ENCODE measurements at regions of chr22 and their contacts with region 1.

Region 1: GRCh38 chr22:21641789-21642583 is at the start of gene SDF2L1:
- DNase-seq: peak; percentile 97 to 99 (median 98)
- ATAC-seq: peak; percentile 96
- H3K4me3 ChIP-seq: peak within 1 kb of the TSS; percentile 74 to 88
- H3K4me3 Mint-ChIP-seq: peak within 1 kb of the TSS; percentile 82
- H3K27ac ChIP-seq: peak within 1 kb of the TSS; percentile 79 to 80
- H3K27ac Mint-ChIP-seq: peak within 1 kb of the TSS; percentile 88
- H3K4me1 ChIP-seq: peaks cover 28% of the 10 kb centered on the region
- H3K4me1 Mint-ChIP-seq: peaks cover 32% of the 10 kb centered on the region
- H3K27me3 ChIP-seq: no peaks in the 10 kb centered on the region
- H3K27me3 Mint-ChIP-seq: no peaks in the 10 kb centered on the region
- CTCF ChIP-seq: no peak
- total RNA-seq, gene SDF2L1: 20.8 to 21.5 TPM

Region 2: GRCh38 chr22:20964090-20964798 is 677.7 kb before region 1 on chr22:
- CTCF ChIA-PET with region 1: no interaction called
- POLR2A ChIA-PET with region 1: no interaction called
- intact Hi-C with region 1: loop called in 1 of 2 experiments (anchors 1 kb)
- DNase-seq: no peak
- ATAC-seq: no peak
- H3K4me3 ChIP-seq: peak overlapping the region; percentile 7 to 35
- H3K4me3 Mint-ChIP-seq: peak overlapping the region; percentile 77
- H3K27ac ChIP-seq: no peak overlapping the region
- H3K27ac Mint-ChIP-seq: no peak overlapping the region
- H3K4me1 ChIP-seq: peaks cover 9% of the 10 kb centered on the region
- H3K4me1 Mint-ChIP-seq: peaks cover 8% of the 10 kb centered on the region
- H3K27me3 ChIP-seq: peaks cover 0 to 15% of the 10 kb centered on the region in 2 experiments
- H3K27me3 Mint-ChIP-seq: peaks cover 17% of the 10 kb centered on the region
- CTCF ChIP-seq: no peak

Region 3: DNA sequence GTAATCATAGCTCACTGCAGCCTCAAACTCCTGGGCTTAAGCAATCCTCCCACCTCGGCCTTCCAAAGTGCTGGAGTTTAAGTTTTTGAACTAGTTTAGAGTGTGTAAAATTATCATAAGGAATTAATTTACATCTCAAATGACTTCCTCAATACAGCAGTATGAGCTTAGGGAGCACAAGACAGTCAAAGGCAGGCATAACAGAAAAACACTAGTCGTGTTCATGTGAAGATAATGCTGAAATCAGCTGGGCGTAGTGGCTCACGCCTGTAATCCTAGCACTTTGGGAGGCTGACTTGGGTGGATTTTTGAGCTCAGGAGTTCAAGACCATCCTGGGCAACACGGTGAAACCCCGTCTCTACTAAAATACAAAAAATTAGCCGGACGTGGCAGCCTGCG is 38.0 kb before region 1 on chr22:
- CTCF ChIA-PET with region 1: interaction called, 11 read pairs
- POLR2A ChIA-PET with region 1: no interaction called
- intact Hi-C with region 1: no loop called
- DNase-seq: no peak
- ATAC-seq: no peak
- H3K4me3 ChIP-seq: no peak overlapping the region
- H3K4me3 Mint-ChIP-seq: no peak overlapping the region
- H3K27ac ChIP-seq: no peak overlapping the region
- H3K27ac Mint-ChIP-seq: no peak overlapping the region
- H3K4me1 ChIP-seq: no peaks in the 10 kb centered on the region
- H3K4me1 Mint-ChIP-seq: peaks cover 46% of the 10 kb centered on the region
- H3K27me3 ChIP-seq: no peaks in the 10 kb centered on the region
- H3K27me3 Mint-ChIP-seq: no peaks in the 10 kb centered on the region
- CTCF ChIP-seq: no peak

Region 4: DNA sequence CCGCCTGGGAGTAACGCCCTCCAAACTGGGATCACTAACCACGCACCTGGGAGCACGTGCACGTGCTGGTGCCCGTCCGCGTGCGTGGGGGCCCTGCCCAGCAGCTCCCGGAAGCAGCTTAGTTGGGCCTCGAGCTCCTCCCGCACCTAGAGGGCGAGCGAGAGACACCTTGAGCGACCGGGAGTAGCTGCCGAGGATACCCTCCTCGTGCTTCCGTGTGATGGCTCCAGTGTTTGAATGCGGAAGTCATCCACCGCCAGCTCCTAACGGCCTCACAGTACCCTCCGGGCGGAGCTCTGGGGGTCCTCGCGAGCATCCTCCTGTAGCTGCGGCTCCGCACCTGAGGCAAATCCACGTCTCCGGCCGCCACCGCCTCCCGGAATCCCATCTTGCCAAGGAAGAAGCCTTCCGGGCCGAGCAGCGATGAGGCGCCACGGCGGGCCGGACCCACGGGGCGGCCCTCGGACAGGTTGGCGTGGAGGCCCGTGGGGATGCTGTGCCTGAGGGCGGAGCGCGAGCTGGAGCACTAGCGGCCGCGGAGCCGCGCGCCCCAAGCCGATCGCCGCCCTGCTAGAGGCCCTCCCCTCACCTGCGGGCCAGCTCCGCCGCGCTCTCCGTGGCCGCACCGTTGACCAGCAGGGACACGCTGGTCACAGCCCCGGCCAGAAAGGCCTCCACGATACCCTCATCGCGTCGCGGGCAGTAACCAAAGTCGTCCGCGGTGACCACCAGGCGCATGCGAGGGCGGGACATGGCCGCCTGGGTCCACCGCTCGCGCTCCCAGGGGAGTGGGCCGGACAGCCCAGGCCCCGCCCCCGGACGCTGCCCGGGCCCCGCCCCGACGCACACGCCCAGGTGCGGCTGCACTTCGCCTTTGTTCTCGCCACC is 12.5 kb before region 1 on chr22 and contains the start of gene YDJC:
- CTCF ChIA-PET with region 1: interaction called, 83 read pairs
- POLR2A ChIA-PET with region 1: interaction called, 62 read pairs
- intact Hi-C with region 1: loop called (anchors 1 kb)
- DNase-seq: peak; percentile 91 to 97 (median 95)
- ATAC-seq: peak; percentile 84
- H3K4me3 ChIP-seq: peak within 1 kb of the TSS; percentile 92 to 99
- H3K4me3 Mint-ChIP-seq: peak within 1 kb of the TSS; percentile 93
- H3K27ac ChIP-seq: peak within 1 kb of the TSS; percentile 89 to 91
- H3K27ac Mint-ChIP-seq: peak within 1 kb of the TSS; percentile 90
- H3K4me1 ChIP-seq: peaks cover 42% of the 10 kb centered on the region
- H3K4me1 Mint-ChIP-seq: peaks cover 37% of the 10 kb centered on the region
- H3K27me3 ChIP-seq: no peaks in the 10 kb centered on the region
- H3K27me3 Mint-ChIP-seq: no peaks in the 10 kb centered on the region
- CTCF ChIP-seq: peak; percentile 95
- total RNA-seq, gene YDJC: 25.6 to 26.0 TPM

Region 5: GRCh38 chr22:21666786-21667185 is 24.8 kb after region 1 on chr22:
- CTCF ChIA-PET with region 1: interaction called, 6 read pairs
- POLR2A ChIA-PET with region 1: interaction called, 10 read pairs
- intact Hi-C with region 1: loop called (anchors 1 kb)
- DNase-seq: no peak
- ATAC-seq: no peak
- H3K4me3 ChIP-seq: peak overlapping the region; percentile 93 to 98
- H3K4me3 Mint-ChIP-seq: peak overlapping the region; percentile 99
- H3K27ac ChIP-seq: peak overlapping the region in 1 of 2 experiments; percentile 89
- H3K27ac Mint-ChIP-seq: peak overlapping the region; percentile 97
- H3K4me1 ChIP-seq: peaks cover 15% of the 10 kb centered on the region
- H3K4me1 Mint-ChIP-seq: peaks cover 32% of the 10 kb centered on the region
- H3K27me3 ChIP-seq: no peaks in the 10 kb centered on the region
- H3K27me3 Mint-ChIP-seq: no peaks in the 10 kb centered on the region
- CTCF ChIP-seq: no peak

Measured in CD8-positive, alpha-beta T cell (primary cell).